Activated B cell treated with CpG ODN at 0.5 μM for 24 hours (primary cell): ENCODE measurements at regions of chr20 and their contacts with region 1.

Region 1: DNA sequence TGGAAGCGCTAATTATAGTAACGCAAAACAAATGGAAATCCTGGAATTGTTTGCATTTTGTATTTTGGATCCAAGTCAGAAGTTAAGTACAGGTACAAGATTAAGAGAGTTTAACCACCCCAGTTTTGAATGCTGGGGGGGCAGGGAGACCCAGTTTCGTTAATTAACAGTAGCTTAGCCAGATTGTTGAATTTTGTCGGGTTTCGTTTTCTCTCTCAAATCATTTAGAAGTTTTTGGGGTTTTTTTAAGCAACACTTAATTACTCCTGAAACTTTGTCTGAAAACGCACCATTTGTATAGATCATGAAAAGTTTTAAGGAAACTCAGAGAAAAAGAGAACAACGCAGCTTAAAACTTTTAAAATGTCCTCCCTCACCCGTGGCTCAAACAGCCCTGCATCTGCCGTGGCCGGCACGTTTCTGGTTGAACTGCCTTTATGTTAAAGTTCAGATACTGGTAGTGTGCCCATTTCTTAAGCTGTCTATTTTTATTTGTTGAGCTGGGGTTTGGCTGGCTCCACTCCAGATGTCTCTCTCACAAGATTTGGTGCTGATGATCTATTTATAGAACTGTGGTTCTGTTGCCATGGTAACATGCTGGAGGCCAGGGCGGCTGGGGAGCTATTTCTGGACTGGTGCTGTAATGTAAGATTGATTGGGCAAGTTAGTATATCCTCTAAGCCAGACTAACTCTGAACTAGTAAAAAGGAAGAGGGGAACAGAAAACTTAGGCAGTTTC is 55.1 kb downstream of the GNAS start:
- DNase-seq: peak; percentile 50
- ATAC-seq: peak; percentile 83
- H3K4me3 Mint-ChIP-seq: peak overlapping the region; percentile 82
- H3K27ac Mint-ChIP-seq: peak overlapping the region; percentile 97
- H3K4me1 Mint-ChIP-seq: peaks cover 61% of the 10 kb centered on the region
- H3K27me3 Mint-ChIP-seq: no peaks in the 10 kb centered on the region
- CTCF ChIP-seq: no peak

Region 2: DNA sequence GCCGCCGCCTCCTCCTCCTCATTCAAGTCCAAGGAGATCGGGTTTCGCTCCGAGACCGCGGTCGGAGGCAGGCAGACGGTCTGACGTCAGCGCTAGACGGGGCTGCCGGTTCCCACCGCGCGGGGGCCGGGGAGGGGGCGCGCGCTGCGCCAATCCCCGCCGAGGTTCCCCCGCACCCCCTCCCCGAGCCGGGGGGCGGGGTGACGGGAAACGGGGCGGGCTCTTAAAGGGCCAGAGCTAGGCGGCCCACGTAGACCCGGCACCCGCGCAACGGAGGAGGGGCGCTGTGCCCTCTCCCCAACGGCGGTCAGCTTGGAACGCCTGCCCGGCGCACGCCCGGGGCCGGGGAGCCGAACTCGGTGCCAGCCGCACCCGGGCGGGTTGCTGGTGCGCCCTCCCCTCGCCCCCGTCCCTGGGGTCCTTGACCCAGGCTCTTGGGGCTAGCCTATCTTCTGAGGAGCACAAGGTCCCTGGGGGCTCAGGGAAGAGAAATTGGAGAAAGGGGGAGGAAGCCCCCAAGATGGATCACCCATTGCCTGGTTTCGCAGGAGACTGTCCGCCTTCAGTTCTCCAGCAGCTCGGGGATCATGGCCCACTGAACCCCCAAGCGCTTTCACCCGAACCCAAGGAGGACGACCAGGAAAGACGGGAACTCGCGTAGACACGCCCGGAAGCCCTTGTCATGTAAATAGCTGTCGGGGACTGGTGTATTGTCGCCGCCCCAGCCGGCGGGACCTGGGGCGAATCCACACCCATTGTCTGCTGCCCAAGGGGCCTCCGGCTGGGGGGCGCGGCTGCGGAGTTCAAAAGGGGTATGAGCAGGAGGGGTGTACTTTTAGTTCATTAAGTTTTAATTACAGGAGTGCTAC is 1197.4 kb before region 1 on chr20 and contains the start of gene PMEPA1:
- CTCF ChIA-PET with region 1: no interaction called
- POLR2A ChIA-PET with region 1: no interaction called
- intact Hi-C with region 1: loop called (anchors 10 kb)
- DNase-seq: peak; percentile 95
- ATAC-seq: peak; percentile 86
- H3K4me3 Mint-ChIP-seq: peak within 1 kb of the TSS; percentile 99
- H3K27ac Mint-ChIP-seq: peak within 1 kb of the TSS; percentile 92
- H3K4me1 Mint-ChIP-seq: peaks cover 59% of the 10 kb centered on the region
- H3K27me3 Mint-ChIP-seq: no peaks in the 10 kb centered on the region
- CTCF ChIP-seq: no peak
- total RNA-seq, gene PMEPA1: 33.1 and 34.8 TPM in 2 replicates

Region 3: DNA sequence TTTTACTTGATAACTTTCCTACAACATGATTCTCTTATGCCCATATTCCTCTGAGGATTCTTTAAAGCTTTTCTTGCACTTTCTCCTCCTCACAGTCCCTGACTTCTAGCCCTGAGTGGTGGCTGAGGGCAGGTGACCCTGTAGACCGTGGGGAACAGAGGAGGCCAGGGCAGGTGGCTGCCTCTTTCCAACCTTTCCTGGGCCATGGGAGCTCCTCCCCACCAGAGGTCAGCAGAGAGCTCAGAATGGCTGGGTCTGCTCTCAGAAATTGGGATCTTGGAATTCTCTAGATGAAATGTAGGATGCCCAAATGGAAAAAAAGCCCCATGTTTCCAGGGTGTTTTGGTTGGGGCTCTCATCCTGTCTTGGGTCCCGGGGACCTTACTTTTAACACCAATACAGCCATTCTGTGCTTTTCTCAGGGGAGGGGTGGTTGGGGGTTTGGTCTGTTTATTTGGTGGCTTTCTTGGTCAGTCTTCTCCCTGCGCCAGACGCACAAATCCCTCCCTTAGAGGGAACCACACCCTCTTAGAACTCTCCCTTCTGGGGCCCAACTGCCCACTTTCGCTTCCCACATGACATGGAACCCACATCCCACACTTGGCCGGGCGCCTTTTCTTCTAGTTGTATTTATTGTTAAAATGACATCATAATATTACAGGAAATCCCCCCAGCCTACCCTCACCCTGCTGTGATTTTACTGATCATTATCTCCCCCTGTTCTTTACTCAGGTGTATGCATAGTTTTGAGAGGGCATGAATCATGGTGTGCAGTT is 37.1 kb before region 1 on chr20:
- CTCF ChIA-PET with region 1: no interaction called
- POLR2A ChIA-PET with region 1: no interaction called
- intact Hi-C with region 1: loop called (anchors 2 kb)
- DNase-seq: peak; percentile 37
- ATAC-seq: peak; percentile 84
- H3K4me3 Mint-ChIP-seq: no peak overlapping the region
- H3K27ac Mint-ChIP-seq: peak overlapping the region; percentile 41
- H3K4me1 Mint-ChIP-seq: peaks cover 11% of the 10 kb centered on the region
- H3K27me3 Mint-ChIP-seq: no peaks in the 10 kb centered on the region
- CTCF ChIP-seq: peak; percentile 83

Region 4: GRCh38 chr20:58888521-58889333 is 18.8 kb before region 1 on chr20:
- CTCF ChIA-PET with region 1: no interaction called
- POLR2A ChIA-PET with region 1: interaction called, 20 read pairs
- intact Hi-C with region 1: loop called (anchors 1 kb)
- DNase-seq: peak; percentile 73
- ATAC-seq: peak; percentile 45
- H3K4me3 Mint-ChIP-seq: peak overlapping the region; percentile 84
- H3K27ac Mint-ChIP-seq: peak overlapping the region; percentile 59
- H3K4me1 Mint-ChIP-seq: peaks cover 27% of the 10 kb centered on the region
- H3K27me3 Mint-ChIP-seq: no peaks in the 10 kb centered on the region
- CTCF ChIP-seq: no peak

Region 5: GRCh38 chr20:58921564-58921963 is 14.0 kb after region 1 on chr20:
- CTCF ChIA-PET with region 1: no interaction called
- POLR2A ChIA-PET with region 1: no interaction called
- intact Hi-C with region 1: no loop called
- DNase-seq: no peak
- ATAC-seq: no peak
- H3K4me3 Mint-ChIP-seq: no peak overlapping the region
- H3K27ac Mint-ChIP-seq: no peak overlapping the region
- H3K4me1 Mint-ChIP-seq: no peaks in the 10 kb centered on the region
- H3K27me3 Mint-ChIP-seq: no peaks in the 10 kb centered on the region
- CTCF ChIP-seq: no peak

Region 6: GRCh38 chr20:58950603-58951002 is 43.0 kb after region 1 on chr20:
- CTCF ChIA-PET with region 1: no interaction called
- POLR2A ChIA-PET with region 1: no interaction called
- intact Hi-C with region 1: loop called (anchors 5 kb)
- DNase-seq: no peak
- ATAC-seq: no peak
- H3K4me3 Mint-ChIP-seq: no peak overlapping the region
- H3K27ac Mint-ChIP-seq: no peak overlapping the region
- H3K4me1 Mint-ChIP-seq: peaks cover 10% of the 10 kb centered on the region
- H3K27me3 Mint-ChIP-seq: peaks cover 2% of the 10 kb centered on the region
- CTCF ChIP-seq: no peak

Region 7: GRCh38 chr20:58980700-58981627 is 73.4 kb after region 1 on chr20 and contains the start of gene NELFCD:
- CTCF ChIA-PET with region 1: no interaction called
- POLR2A ChIA-PET with region 1: interaction called, 22 read pairs
- intact Hi-C with region 1: loop called (anchors 1 kb)
- DNase-seq: peak; percentile 95
- ATAC-seq: peak; percentile 89
- H3K4me3 Mint-ChIP-seq: peak within 1 kb of the TSS; percentile 91
- H3K27ac Mint-ChIP-seq: peak within 1 kb of the TSS; percentile 80
- H3K4me1 Mint-ChIP-seq: peaks cover 45% of the 10 kb centered on the region
- H3K27me3 Mint-ChIP-seq: no peaks in the 10 kb centered on the region
- CTCF ChIP-seq: no peak
- total RNA-seq, gene NELFCD: 97.2 and 107 TPM in 2 replicates

Region 8: DNA sequence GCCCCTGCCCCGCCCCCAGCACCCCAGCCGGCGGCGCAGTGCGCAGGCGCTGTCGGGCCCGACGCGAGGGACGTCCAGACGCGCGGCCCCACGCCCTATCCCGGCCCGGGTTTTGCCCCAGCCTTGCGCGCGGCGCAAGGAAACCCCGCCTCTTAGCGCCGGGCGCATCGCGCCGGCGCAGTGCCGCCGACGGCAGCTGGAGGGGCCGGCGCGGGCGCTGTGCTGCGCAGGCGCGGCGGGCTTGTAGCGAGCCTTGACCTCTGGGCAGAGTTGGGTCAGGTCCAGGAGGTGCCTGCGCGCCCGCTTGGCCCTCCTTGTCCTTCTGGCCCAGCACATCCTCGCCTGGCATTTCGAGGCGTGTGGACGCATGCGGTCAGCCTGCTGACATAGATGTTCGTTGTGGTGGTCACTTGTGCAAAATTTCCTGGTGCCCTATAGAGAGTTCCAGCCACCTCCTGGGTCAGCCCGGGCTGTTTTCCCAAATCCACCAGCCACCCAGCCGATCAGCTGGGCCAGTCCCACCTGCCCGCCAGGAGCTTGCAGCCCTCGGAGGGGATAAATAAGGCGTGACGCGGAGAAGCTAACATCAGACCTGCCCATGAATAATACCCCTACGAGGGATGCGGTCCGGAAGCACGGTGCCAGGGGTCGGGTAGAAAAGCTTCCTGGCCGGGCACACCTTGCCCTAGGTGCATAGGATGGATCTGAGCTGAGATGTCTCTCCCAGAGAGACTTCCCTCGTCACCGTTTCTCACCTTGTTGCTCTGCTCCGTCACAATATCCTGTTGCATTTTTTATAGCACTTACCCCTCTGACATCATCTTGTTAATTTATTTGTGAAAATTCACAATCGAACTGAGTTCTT is 135.5 kb after region 1 on chr20:
- CTCF ChIA-PET with region 1: no interaction called
- POLR2A ChIA-PET with region 1: interaction called, 7 read pairs
- intact Hi-C with region 1: loop called (anchors 1 kb)
- DNase-seq: peak; percentile 97
- ATAC-seq: peak; percentile 97
- H3K4me3 Mint-ChIP-seq: peak overlapping the region; percentile 95
- H3K27ac Mint-ChIP-seq: peak overlapping the region; percentile 91
- H3K4me1 Mint-ChIP-seq: peaks cover 52% of the 10 kb centered on the region
- H3K27me3 Mint-ChIP-seq: no peaks in the 10 kb centered on the region
- CTCF ChIP-seq: no peak